IMR-90 (cell line): ENCODE measurements at regions of chr17 and their contacts with region 1.

Region 1: GRCh38 chr17:42311240-42312034 is 23.1 kb downstream of the STAT5A start:
- DNase-seq: peak; percentile 94
- ATAC-seq: peak; percentile 91
- H3K4me3 ChIP-seq: no peak overlapping the region
- H3K27ac ChIP-seq: peak overlapping the region; percentile 45
- H3K4me1 ChIP-seq: peaks cover 11% of the 10 kb centered on the region
- H3K27me3 ChIP-seq: no peaks in the 10 kb centered on the region
- CTCF ChIP-seq: no peak
- POLR2A ChIP-seq: no peak
- RAD21 ChIP-seq: no peak

Region 2: GRCh38 chr17:40967581-40967980 is 1343.9 kb before region 1 on chr17:
- CTCF ChIA-PET with region 1: no interaction called
- POLR2A ChIA-PET with region 1: no interaction called
- dilution Hi-C with region 1: no loop called
- in situ Hi-C with region 1: no loop called
- intact Hi-C with region 1: no loop called
- DNase-seq: no peak
- ATAC-seq: no peak
- H3K4me3 ChIP-seq: no peak overlapping the region
- H3K27ac ChIP-seq: no peak overlapping the region
- H3K4me1 ChIP-seq: peaks cover 3% of the 10 kb centered on the region; the same call in 1 of the 2 replicates
- H3K27me3 ChIP-seq: no peaks in the 10 kb centered on the region
- CTCF ChIP-seq: no peak
- POLR2A ChIP-seq: no peak
- RAD21 ChIP-seq: no peak

Region 3: DNA sequence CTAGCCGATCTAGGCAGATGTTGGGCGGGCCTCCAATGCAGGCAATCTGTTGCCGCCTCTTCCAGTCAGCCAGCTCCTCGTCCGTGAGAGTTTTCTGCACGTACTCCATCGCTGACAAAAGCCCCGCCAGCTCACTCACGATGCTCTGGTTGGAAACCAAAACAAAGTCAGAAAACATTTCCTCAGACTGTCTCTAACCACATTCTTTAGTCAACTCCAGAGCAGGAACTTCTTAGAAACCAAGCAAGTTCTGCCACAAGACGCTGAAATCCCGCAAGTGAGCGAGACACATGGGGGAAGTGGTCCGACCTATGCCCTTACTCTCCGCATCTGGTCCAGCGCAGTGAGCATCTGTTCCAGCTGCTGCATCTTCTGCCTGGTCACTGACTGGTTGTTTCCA is 26.0 kb after region 1 on chr17:
- CTCF ChIA-PET with region 1: no interaction called
- POLR2A ChIA-PET with region 1: no interaction called
- dilution Hi-C with region 1: no loop called
- in situ Hi-C with region 1: no loop called
- intact Hi-C with region 1: no loop called
- DNase-seq: peak; percentile 81
- ATAC-seq: peak; percentile 56
- H3K4me3 ChIP-seq: no peak overlapping the region
- H3K27ac ChIP-seq: no peak overlapping the region
- H3K4me1 ChIP-seq: peaks cover 12% of the 10 kb centered on the region
- H3K27me3 ChIP-seq: no peaks in the 10 kb centered on the region
- CTCF ChIP-seq: no peak
- POLR2A ChIP-seq: no peak
- RAD21 ChIP-seq: no peak

Region 4: DNA sequence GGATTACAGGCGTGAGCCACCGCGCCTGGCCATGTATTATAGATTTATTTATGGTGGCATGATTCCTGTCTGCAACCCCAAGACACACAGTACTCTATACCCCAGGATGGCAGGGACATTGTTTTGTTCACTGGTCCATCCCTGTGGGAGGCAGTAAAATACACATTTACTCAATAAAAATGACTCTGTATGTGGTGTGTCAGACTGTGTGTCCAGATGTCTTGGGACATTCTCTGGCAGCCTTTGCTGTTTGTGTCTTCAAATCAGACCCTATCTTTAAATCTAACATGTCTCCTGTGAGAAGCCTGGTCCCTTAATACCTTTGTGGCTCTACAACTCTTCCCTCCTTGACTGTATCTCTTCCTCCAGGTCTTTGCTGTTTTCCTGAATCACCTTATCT is 248.8 kb after region 1 on chr17:
- CTCF ChIA-PET with region 1: no interaction called
- POLR2A ChIA-PET with region 1: interaction called, 17 read pairs
- dilution Hi-C with region 1: no loop called
- in situ Hi-C with region 1: no loop called
- intact Hi-C with region 1: no loop called
- DNase-seq: no peak
- ATAC-seq: no peak
- H3K4me3 ChIP-seq: no peak overlapping the region
- H3K27ac ChIP-seq: no peak overlapping the region
- H3K4me1 ChIP-seq: peaks cover 14% of the 10 kb centered on the region
- H3K27me3 ChIP-seq: no peaks in the 10 kb centered on the region
- CTCF ChIP-seq: no peak
- POLR2A ChIP-seq: no peak
- RAD21 ChIP-seq: no peak